Activated naive CD4-positive, alpha-beta T cell treated with anti-CD3 and anti-CD28 coated beads for 36 hours (primary cell): ENCODE measurements at regions of chr10 and their contacts with region 1.

Region 1: DNA sequence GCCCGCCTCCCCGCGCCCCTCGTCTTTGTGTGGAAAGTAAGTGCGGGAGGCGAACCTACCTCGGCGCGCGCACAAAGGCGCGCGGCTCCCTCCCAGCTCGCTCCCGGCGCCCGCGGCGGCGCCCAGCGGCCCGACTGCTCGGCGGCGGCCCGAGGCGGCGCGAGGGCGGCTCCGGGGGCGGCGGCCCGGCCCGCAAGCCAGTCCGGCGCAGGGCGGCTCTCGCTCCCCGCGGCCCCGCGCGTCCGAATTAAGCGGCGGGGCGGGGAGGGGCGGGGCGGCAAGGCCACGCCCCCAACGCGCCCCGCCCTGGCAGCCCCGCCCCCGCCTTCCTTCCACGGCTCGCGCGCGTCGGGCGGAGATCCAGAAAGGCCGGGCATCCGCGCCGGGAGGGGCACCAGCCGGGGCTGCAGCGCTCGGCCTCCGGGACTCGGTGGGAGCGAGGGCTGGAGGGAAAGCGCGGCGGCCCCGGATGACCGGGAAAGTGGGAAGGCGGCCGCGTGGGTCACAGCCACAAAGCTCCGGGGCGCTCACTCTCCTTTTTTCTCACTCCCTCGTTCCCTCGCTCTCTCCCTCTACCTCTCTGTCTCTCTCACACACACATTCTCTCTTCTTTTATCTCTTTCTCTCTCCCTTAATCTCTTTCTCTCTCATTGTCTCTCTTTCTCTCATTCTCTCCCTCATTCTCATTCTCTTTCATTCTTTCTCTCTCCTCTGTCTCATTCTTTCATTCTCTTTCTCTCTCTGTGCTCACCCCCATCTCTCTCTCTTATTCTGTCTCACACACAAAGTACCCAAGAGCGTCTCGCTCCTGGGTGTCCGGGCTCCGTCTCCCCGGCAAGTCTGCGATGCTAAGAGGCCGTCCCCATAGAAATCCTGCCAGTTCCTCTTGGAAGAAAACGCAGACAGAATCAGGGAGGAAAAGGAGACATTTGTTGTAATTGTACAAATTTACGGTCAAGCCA is 170.2 kb downstream of the FAM107B start:
- DNase-seq: peak; percentile 66
- H3K4me3 Mint-ChIP-seq: peak overlapping the region; percentile 87
- H3K27ac Mint-ChIP-seq: peak overlapping the region; percentile 94
- H3K4me1 Mint-ChIP-seq: peaks cover 63% of the 10 kb centered on the region
- H3K27me3 Mint-ChIP-seq: no peaks in the 10 kb centered on the region

Region 2: GRCh38 chr10:14385596-14386593 is 218.6 kb before region 1 on chr10:
- CTCF ChIA-PET with region 1: no interaction called
- intact Hi-C with region 1: loop called (anchors 5 kb)
- DNase-seq: peak; percentile 67
- H3K4me3 Mint-ChIP-seq: no peak overlapping the region
- H3K27ac Mint-ChIP-seq: no peak overlapping the region
- H3K4me1 Mint-ChIP-seq: peaks cover 80% of the 10 kb centered on the region
- H3K27me3 Mint-ChIP-seq: peaks cover 3% of the 10 kb centered on the region

Region 3: DNA sequence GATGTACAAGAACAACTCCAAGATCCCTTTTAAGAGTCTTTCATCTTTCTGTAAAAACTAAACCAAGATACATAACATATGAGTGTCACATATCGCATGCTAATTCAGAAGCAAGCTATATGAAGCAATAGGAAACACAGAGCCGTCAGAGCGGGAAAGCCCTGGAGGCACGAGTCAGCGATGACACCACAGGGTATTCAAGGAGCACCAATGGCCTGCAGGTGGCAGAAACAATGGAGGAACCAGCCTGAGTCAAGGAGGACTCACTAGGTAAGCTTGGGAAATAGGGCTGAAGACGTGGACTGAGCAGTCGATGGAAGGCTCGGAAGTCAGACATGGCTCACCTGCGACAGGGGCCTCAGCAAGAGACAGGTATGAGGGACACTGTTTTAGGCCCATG is 44.2 kb before region 1 on chr10:
- CTCF ChIA-PET with region 1: interaction called, 3 read pairs
- intact Hi-C with region 1: loop called (anchors 1 kb)
- DNase-seq: peak; percentile 94
- H3K4me3 Mint-ChIP-seq: peak overlapping the region; percentile 13
- H3K27ac Mint-ChIP-seq: peak overlapping the region; percentile 88
- H3K4me1 Mint-ChIP-seq: peaks cover 91% of the 10 kb centered on the region
- H3K27me3 Mint-ChIP-seq: no peaks in the 10 kb centered on the region

Region 4: GRCh38 chr10:14648005-14648765 is 43.7 kb after region 1 on chr10:
- CTCF ChIA-PET with region 1: interaction called, 3 read pairs
- intact Hi-C with region 1: loop called (anchors 1 kb)
- DNase-seq: peak; percentile 83
- H3K4me3 Mint-ChIP-seq: peak overlapping the region; percentile 75
- H3K27ac Mint-ChIP-seq: peak overlapping the region; percentile 98
- H3K4me1 Mint-ChIP-seq: peaks cover 69% of the 10 kb centered on the region
- H3K27me3 Mint-ChIP-seq: no peaks in the 10 kb centered on the region

Region 5: GRCh38 chr10:14723052-14723689 is 118.7 kb after region 1 on chr10:
- CTCF ChIA-PET with region 1: no interaction called
- intact Hi-C with region 1: loop called (anchors 1 kb)
- DNase-seq: peak; percentile 67
- H3K4me3 Mint-ChIP-seq: no peak overlapping the region
- H3K27ac Mint-ChIP-seq: no peak overlapping the region
- H3K4me1 Mint-ChIP-seq: peaks cover 35% of the 10 kb centered on the region
- H3K27me3 Mint-ChIP-seq: no peaks in the 10 kb centered on the region

Region 6: DNA sequence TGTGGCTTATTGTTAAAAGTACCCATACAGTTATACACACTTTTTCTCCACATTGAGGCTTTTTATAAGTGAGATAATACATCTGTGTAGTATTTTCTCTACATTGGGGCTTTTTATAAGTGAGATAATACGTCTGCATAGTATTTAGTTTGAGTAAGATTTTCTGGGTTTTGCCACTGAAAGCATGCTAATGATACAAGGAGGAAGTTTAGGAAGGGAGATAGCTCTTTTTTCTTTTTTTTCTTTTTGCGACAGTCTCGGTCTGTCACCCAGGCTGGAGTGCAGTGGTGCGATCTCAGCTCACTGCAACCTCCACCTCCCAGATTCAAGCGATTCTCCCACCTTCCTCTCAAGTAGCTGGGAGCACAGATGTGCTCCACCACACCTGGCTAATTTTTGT is 156.9 kb after region 1 on chr10:
- CTCF ChIA-PET with region 1: no interaction called
- intact Hi-C with region 1: no loop called
- DNase-seq: no peak
- H3K4me3 Mint-ChIP-seq: no peak overlapping the region
- H3K27ac Mint-ChIP-seq: no peak overlapping the region
- H3K4me1 Mint-ChIP-seq: peaks cover 8% of the 10 kb centered on the region
- H3K27me3 Mint-ChIP-seq: no peaks in the 10 kb centered on the region

Region 7: DNA sequence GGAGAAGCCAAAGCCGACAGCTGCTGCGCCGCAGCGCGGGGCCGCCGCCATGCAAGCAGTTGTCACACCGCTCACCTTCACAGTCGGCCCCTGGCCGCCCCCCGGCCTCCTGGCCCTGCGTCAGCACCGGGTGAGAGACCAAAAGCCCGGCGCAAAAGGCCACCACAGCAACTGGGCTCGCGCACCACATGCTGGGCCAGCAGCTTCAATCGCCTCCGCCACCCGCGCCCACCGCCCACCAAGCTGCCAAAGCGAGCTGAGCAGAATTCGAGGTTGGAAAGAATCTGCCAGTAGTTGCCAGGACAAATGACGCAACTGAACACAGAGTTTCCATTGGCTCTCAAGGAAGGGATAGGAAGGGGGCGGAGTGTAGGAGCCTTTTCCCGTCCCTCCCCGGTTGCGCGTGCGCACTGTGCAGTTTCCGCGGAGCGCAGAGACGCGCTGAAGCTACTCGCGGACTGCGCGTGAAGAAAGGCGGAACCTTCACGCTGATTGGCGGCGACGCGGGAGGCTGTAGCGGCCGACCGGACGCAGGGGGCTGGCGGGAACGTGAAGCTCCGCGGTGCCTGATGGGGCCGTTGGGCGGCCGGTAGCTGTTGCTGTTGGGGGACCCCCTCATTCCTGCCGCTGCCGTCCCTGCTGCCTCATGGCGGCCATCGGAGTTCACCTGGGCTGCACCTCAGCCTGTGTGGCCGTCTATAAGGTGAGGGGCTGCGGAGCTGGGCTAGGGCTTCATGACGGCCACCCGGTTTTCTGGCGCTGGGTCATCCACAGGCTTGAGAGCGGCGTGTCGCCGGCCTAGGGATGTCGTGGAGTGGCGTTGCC is 233.5 kb after region 1 on chr10 and contains the starts of genes CDNF, HSPA14 and MSANTD7:
- CTCF ChIA-PET with region 1: interaction called, 4 read pairs
- intact Hi-C with region 1: loop called (anchors 1 kb)
- DNase-seq: peak; percentile 99
- H3K4me3 Mint-ChIP-seq: peak within 1 kb of the TSS; percentile 92
- H3K27ac Mint-ChIP-seq: peak within 1 kb of the TSS; percentile 93
- H3K4me1 Mint-ChIP-seq: peaks cover 22% of the 10 kb centered on the region
- H3K27me3 Mint-ChIP-seq: no peaks in the 10 kb centered on the region
- total RNA-seq, gene CDNF: 1.6 to 1.8 TPM
- total RNA-seq, gene HSPA14: 28.1 to 29.9 TPM
- total RNA-seq, gene MSANTD7: 19.6 to 21.3 TPM

Region 8: DNA sequence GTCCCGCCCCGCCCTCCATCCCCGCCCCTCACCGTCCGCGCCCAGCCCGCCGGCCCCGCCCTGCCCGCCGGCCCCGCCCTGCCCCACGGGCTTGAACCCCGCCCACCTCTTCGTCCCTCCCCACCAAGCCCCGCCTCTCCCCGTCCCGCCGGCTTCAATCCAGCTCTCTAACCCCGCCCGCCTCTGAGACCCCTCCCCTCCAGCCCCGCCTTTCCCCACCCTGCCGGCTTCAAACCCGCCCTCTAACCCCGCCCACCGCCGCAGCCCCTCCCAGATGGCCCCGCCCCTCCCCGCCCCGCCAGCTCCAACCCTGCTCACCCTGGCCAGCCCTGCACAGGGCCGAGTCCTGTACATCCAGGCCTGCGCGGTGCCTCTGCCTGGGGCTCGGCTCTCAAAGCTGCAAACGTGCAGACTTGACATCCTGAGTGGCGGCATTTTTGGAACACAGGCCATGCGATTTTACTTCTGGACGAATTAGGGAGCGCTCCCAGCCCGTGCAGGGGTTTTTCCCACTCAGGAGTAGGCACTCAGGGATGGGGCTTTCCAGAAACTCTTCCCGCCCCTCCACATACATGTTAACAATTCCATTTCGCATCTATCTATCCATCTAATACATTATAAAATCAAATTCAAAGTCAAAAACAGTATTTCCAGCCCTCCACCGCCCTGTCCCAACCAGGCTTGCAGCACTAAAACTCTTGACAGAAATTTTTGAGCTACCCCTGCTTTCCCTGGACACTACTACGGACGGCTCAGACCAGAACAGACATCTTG is 564.5 kb after region 1 on chr10:
- CTCF ChIA-PET with region 1: no interaction called
- intact Hi-C with region 1: loop called (anchors 2 kb)
- DNase-seq: peak; percentile 99
- H3K4me3 Mint-ChIP-seq: peak overlapping the region; percentile 74
- H3K27ac Mint-ChIP-seq: peak overlapping the region; percentile 76
- H3K4me1 Mint-ChIP-seq: peaks cover 49% of the 10 kb centered on the region
- H3K27me3 Mint-ChIP-seq: no peaks in the 10 kb centered on the region